ENCODE measurements at regions of chr16 and their contacts with region 1.

Region 1: GRCh38 chr16:53743149-53743566 is 39.2 kb downstream of the FTO start:
- DNase-seq: peak; percentile 25
- ATAC-seq: no peak
- H3K4me3 Mint-ChIP-seq: no peak overlapping the region
- H3K27ac Mint-ChIP-seq: no peak overlapping the region
- H3K4me1 Mint-ChIP-seq: peaks cover 16% of the 10 kb centered on the region
- H3K27me3 Mint-ChIP-seq: no peaks in the 10 kb centered on the region

Region 2: DNA sequence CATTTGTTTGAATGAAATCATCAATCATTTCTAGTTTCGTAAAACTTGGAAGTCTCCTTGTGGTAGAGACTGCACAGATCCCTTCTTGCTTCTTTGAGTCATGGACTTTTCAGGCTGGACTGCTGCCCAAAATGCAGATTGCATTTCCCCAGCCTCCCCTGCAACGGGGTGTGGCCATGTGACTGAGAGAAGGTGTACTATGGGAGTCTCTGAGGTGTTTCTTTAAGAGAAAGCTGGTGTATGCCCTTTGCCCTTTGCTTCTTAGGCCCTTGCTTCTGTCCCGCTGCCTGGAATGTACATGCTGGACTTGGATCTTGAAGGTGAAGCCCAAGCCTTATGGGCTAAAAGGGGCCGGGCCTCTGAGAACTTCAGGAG is 12.4 kb after region 1 on chr16:
- CTCF ChIA-PET with region 1: interaction called, 48 read pairs
- POLR2A ChIA-PET with region 1: no interaction called
- DNase-seq: no peak
- ATAC-seq: no peak
- H3K4me3 Mint-ChIP-seq: no peak overlapping the region
- H3K27ac Mint-ChIP-seq: no peak overlapping the region
- H3K4me1 Mint-ChIP-seq: no peaks in the 10 kb centered on the region
- H3K27me3 Mint-ChIP-seq: no peaks in the 10 kb centered on the region